Vagina (tissue), 2 donors: ENCODE measurements at regions of chr2 and their contacts with region 1.

Region 1: GRCh38 chr2:208265801-208266552 is at the start of gene PIKFYVE:
- DNase-seq: peak in 1 of 2 donors; percentile 97
- H3K4me3 ChIP-seq: peak within 1 kb of the TSS; percentile 82 to 97
- H3K27ac ChIP-seq: peak within 1 kb of the TSS; percentile 95
- H3K4me1 ChIP-seq: peaks cover 42% of the 10 kb centered on the region
- H3K27me3 ChIP-seq: no peaks in the 10 kb centered on the region
- CTCF ChIP-seq: no peak
- POLR2A ChIP-seq: peak in 1 of 2 donors; percentile 56
- total RNA-seq, gene PIKFYVE: 18.7 TPM

Region 2: DNA sequence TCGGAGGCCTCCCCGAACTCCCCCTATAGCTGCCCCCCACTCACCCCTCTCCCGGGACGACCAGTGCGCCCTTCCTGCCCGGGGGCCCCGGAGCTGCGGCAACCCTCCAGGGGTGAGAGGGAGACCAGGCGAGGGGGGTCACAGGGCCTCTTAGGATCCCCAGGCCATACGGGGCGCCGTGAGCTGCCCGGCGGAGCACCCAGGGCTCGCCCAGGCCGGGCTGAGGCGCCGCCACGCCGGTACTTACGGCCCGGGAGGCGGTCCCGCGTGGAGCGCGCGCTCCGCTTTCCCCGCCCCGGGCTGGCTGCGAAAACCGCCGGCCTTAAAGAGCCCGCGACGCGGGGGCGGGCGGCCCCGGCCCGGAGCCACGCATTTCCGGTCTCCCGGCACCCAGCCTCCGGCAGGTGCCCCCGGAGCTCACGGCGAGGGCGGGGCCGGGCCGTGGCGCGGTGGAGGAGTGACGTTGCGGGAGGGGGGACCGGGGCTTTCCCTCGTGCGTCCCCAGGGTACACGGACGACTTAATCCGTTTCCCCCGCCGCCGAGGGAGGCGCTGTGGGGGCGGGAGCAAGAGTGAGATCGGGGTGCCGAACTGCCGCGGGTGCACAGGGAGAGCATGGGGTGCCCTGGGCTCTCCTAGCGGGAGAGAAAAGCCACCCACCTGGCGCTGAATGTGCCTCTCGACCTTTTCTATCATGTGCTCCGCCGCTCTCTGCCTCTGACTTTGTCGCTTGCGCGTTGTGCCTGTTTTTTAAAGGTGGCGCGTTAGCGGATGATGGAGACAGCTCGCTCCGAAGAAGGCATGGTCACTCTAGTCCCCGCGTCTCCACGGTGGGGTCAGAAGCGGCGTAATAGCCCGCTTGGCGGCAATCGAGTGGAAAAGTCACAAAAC is 640.7 kb before region 1 on chr2 and contains the start of gene METTL21A:
- intact Hi-C with region 1: loop called (anchors 10 kb)
- DNase-seq: no peak
- H3K4me3 ChIP-seq: peak within 1 kb of the TSS; percentile 64 to 82
- H3K27ac ChIP-seq: peak within 1 kb of the TSS; percentile 96
- H3K4me1 ChIP-seq: peaks cover 29% of the 10 kb centered on the region
- H3K27me3 ChIP-seq: no peaks in the 10 kb centered on the region
- CTCF ChIP-seq: peak in 2 of 3 experiments; percentile 14 to 33
- POLR2A ChIP-seq: peak in 1 of 2 donors; percentile 57
- total RNA-seq, gene METTL21A: 7.6 TPM

Region 3: DNA sequence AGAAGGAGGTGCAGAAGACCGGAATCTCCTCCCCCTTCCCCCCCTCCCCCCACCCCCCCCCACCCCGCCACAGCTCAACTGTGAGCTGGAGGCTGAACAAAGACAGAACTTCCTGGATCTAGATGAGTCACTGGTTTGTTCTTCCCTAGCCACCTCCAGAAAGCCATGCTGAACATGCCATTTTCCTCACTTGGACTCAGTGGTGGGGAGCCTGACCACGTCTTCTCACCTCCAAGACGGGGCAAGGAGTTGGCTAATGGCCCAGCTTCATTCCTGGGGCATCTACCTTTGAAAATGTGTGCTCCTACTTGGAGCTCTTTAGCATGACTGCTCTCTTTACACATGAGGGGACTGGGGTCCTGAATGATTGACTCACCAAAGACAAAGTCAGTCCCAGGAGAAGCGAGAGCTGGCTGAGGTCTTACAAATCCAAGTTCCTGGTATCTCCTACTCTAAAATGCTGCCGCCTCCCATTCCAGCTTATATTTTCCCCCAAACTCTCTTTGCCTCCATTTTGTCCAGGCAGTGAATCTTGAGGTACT is 473.7 kb before region 1 on chr2:
- intact Hi-C with region 1: no loop called
- DNase-seq: no peak
- H3K4me3 ChIP-seq: no peak overlapping the region
- H3K27ac ChIP-seq: no peak overlapping the region
- H3K4me1 ChIP-seq: no peaks in the 10 kb centered on the region
- H3K27me3 ChIP-seq: no peaks in the 10 kb centered on the region
- CTCF ChIP-seq: no peak
- POLR2A ChIP-seq: no peak